Activated CD4-positive, alpha-beta memory T cell treated with anti-CD3 and anti-CD28 coated beads for 36 hours (primary cell): ENCODE measurements at regions of chr4 and their contacts with region 1.

Region 1: GRCh38 chr4:101419324-101420135 is 72.2 kb upstream of the PPP3CA start:
- DNase-seq: no peak
- H3K4me3 Mint-ChIP-seq: no peak overlapping the region
- H3K27ac Mint-ChIP-seq: no peak overlapping the region
- H3K4me1 Mint-ChIP-seq: peaks cover 35% of the 10 kb centered on the region
- H3K27me3 Mint-ChIP-seq: peaks cover 38% of the 10 kb centered on the region

Region 2: GRCh38 chr4:101020956-101021355 is 398.6 kb before region 1 on chr4:
- CTCF ChIA-PET with region 1: no interaction called
- POLR2A ChIA-PET with region 1: interaction called, 3 read pairs
- intact Hi-C with region 1: loop called (anchors 1 kb)
- DNase-seq: peak; percentile 13
- H3K4me3 Mint-ChIP-seq: peak overlapping the region; percentile 12
- H3K27ac Mint-ChIP-seq: peak overlapping the region; percentile 50
- H3K4me1 Mint-ChIP-seq: peaks cover 58% of the 10 kb centered on the region
- H3K27me3 Mint-ChIP-seq: no peaks in the 10 kb centered on the region

Region 3: GRCh38 chr4:101155368-101155767 is 264.2 kb before region 1 on chr4:
- CTCF ChIA-PET with region 1: no interaction called
- POLR2A ChIA-PET with region 1: no interaction called
- intact Hi-C with region 1: loop called (anchors 1 kb)
- DNase-seq: no peak
- H3K4me3 Mint-ChIP-seq: no peak overlapping the region
- H3K27ac Mint-ChIP-seq: no peak overlapping the region
- H3K4me1 Mint-ChIP-seq: peaks cover 45% of the 10 kb centered on the region
- H3K27me3 Mint-ChIP-seq: no peaks in the 10 kb centered on the region

Region 4: DNA sequence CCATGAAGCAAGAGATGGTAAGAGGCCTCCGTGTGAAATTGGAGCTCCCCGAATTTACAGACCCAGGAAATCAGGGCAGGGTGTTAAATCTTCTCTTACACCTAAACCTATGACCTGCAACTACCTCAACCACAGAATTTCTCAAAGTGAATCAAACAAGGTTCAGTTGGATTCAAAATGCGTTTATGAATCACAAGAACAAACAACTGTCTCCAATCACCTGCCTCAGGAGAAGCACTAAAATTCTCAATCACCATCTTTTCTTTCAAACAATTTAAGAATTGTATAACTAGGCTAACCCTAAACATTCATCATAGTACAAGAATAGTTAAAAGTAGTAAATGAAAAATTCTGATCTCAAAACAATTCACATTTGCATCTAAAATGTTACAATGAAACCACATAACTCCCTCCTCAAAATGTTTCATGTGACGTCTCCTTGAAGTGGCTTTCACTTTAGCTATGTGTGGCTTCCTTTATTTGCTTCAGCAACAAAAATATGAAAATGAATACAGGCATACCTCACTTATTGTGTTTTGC is 91.4 kb before region 1 on chr4:
- CTCF ChIA-PET with region 1: no interaction called
- POLR2A ChIA-PET with region 1: interaction called, 13 read pairs
- intact Hi-C with region 1: loop called (anchors 1 kb)
- DNase-seq: peak; percentile 37
- H3K4me3 Mint-ChIP-seq: peak overlapping the region; percentile 63
- H3K27ac Mint-ChIP-seq: peak overlapping the region; percentile 65
- H3K4me1 Mint-ChIP-seq: peaks cover 48% of the 10 kb centered on the region
- H3K27me3 Mint-ChIP-seq: peaks cover 2% of the 10 kb centered on the region

Region 5: GRCh38 chr4:101730291-101731117 is 311.0 kb after region 1 on chr4:
- CTCF ChIA-PET with region 1: no interaction called
- POLR2A ChIA-PET with region 1: no interaction called
- intact Hi-C with region 1: no loop called
- DNase-seq: peak; percentile 68
- H3K4me3 Mint-ChIP-seq: no peak overlapping the region
- H3K27ac Mint-ChIP-seq: no peak overlapping the region
- H3K4me1 Mint-ChIP-seq: no peaks in the 10 kb centered on the region
- H3K27me3 Mint-ChIP-seq: peaks cover 6% of the 10 kb centered on the region

Region 6: DNA sequence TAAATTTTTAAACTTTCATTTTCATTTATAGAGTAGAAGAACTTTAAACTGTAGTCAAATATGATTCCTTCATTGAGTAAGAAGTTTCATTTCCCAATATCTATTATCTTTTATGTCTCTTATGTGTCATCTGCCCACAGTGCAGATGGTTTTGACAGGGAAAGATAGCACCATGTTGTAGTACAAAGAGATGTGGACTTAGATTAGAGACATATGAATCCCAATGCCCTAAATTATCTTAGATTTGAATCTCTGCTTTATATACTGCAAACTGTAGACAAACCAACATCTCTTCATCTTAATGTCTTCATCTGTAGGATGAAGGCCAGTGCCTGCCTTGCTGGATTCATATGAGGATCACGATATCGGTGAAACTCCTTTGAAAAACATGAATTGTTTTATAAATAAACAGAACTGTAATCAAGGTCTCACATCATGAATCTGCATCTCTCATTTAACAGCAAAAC is 588.5 kb after region 1 on chr4:
- CTCF ChIA-PET with region 1: no interaction called
- POLR2A ChIA-PET with region 1: no interaction called
- intact Hi-C with region 1: loop called (anchors 2 kb)
- DNase-seq: no peak
- H3K4me3 Mint-ChIP-seq: no peak overlapping the region
- H3K27ac Mint-ChIP-seq: no peak overlapping the region
- H3K4me1 Mint-ChIP-seq: peaks cover 10% of the 10 kb centered on the region
- H3K27me3 Mint-ChIP-seq: no peaks in the 10 kb centered on the region